Left cardiac atrium (tissue), 4 donors: ENCODE measurements at regions of chr12 and their contacts with region 1.

Region 1: GRCh38 chr12:113196996-113197395 is 11.5 kb downstream of the RITA1 start:
- DNase-seq: peak; percentile 74
- ATAC-seq: peak; percentile 82 to 90

Region 2: GRCh38 chr12:113130457-113131135 is 66.4 kb before region 1 on chr12:
- intact Hi-C with region 1: no loop called
- DNase-seq: no peak
- ATAC-seq: no peak

Region 3: DNA sequence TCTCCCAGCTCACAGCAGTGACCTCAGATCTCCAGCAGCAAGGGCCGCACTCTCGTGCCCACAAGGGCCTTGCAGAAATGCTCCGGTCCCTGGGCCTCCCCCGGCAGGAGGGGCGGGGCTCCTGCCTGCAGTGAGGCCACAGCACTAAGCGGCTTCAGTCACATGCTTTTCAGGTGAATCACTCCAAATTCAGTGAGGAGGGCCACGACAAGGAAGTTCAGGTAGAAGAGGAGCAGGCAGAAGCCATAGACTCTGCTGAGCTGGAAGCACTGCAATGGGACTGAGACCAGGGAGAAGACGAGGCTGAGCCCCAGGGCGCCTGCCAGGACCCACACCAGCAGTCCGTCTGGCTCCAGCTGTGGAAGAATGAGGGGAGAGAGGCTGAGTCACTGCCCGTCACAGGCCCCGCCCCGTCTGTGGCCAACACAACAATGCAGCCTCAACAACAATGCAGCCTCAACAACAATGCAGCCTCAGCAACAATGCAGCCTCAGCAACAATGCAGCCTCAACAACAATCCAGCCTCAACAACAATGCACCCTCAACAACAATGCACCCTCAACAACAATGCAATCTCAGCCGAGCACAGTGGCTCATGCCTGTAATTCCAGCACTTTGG is 102.7 kb after region 1 on chr12:
- intact Hi-C with region 1: loop called in 1 of 2 experiments (anchors 10 kb)
- DNase-seq: peak; percentile 68
- ATAC-seq: peak; percentile 44 to 80

Region 4: DNA sequence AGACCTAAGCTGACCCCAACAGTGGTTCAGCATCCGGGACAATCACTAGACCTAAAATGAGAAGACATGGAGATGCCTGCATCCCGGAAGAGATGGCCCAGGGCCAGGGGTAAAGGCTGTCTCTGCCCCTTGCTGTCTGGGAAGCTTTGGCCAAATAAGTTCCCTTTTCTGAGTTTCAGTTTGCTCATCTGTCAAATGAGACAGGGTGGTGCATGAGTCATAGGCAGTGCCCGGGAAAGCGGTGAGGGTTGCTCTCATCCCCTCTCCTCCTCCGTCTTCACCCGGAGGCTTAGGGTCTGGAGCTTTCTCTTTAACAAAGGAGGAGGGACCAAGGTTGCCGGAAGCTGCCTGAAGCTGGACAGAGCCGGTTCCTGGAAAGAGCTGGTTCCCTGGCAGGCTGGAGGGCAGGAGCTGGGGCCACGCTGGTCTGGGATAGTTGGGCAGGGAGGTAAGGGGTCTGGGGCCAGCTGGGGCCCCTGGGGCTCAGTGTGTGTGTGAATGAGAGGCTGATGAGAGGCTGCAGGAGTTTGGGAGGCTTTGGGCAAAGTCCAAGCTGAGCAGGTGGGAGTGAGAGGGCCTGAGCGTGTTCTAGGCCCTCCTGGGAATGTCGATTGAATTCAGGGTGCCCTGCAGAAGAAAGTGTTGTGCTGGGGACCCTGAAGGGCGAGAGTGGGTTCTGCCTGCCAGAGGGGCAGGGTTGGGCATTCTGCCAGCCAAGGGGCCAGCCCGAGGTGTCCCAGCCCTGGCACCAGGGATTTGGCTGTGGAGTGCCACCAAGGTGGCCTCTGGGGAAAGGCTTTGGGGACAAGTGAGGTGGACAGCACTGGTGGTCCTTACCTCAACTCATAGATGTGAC is 225.3 kb after region 1 on chr12 and contains the start of gene SDSL:
- intact Hi-C with region 1: loop called in 1 of 2 experiments (anchors 5 kb)
- DNase-seq: peak; percentile 80
- ATAC-seq: peak; percentile 83 to 97
- total RNA-seq, gene SDSL: 4.2 to 7.0 TPM